Activated CD8-positive, alpha-beta memory T cell treated with anti-CD3 and anti-CD28 coated beads, Interleukin-2, amount 10 ng/mL, durations not matched to agents 7 days and 5 days (primary cell): ENCODE measurements at regions of chr5 and their contacts with region 1.

Region 1: GRCh38 chr5:173293817-173294672 is 34.2 kb downstream of the STC2 start:
- DNase-seq: peak; percentile 74
- ATAC-seq: peak; percentile 84
- H3K4me3 Mint-ChIP-seq: peak overlapping the region; percentile 22
- H3K27ac Mint-ChIP-seq: no peak overlapping the region
- H3K4me1 Mint-ChIP-seq: peaks cover 13% of the 10 kb centered on the region
- H3K27me3 Mint-ChIP-seq: peaks cover 54% of the 10 kb centered on the region

Region 2: DNA sequence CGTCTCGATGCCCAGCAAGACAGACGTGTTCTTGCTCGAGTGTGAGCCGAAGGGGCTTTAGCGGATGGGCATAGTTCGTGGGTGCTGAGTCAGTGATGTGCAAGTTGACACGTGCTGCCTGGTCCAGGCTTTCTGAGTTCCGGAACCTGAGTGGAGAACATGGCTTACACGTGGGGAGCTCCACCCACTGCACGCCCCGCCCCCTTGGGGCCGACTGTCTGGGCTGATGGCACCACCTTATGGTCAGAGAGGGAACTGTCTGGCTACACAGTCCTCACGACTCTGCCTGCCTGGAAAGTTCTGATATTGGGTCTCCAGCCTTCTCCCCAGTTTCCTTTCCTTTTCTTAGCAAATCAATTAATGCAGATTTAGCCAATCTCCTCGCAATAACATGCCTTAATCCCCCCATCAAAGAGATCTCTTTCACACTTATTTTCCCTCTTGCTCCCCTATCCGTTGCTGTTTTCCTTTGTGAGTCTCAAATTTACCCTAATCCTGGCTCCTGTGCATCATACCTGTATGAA is 38.0 kb after region 1 on chr5:
- CTCF ChIA-PET with region 1: interaction called, 121 read pairs
- DNase-seq: peak; percentile 92
- ATAC-seq: peak; percentile 82
- H3K4me3 Mint-ChIP-seq: no peak overlapping the region
- H3K27ac Mint-ChIP-seq: peak overlapping the region; percentile 22
- H3K4me1 Mint-ChIP-seq: peaks cover 33% of the 10 kb centered on the region
- H3K27me3 Mint-ChIP-seq: peaks cover 42% of the 10 kb centered on the region

Region 3: GRCh38 chr5:173573126-173573960 is 279.3 kb after region 1 on chr5:
- CTCF ChIA-PET with region 1: interaction called, 11 read pairs
- DNase-seq: peak; percentile 65
- ATAC-seq: peak; percentile 74
- H3K4me3 Mint-ChIP-seq: no peak overlapping the region
- H3K27ac Mint-ChIP-seq: no peak overlapping the region
- H3K4me1 Mint-ChIP-seq: no peaks in the 10 kb centered on the region
- H3K27me3 Mint-ChIP-seq: peaks cover 13% of the 10 kb centered on the region